Naive thymus-derived CD8-positive, alpha-beta T cell (primary cell): ENCODE measurements at regions of chr20 and their contacts with region 1.

Region 1: DNA sequence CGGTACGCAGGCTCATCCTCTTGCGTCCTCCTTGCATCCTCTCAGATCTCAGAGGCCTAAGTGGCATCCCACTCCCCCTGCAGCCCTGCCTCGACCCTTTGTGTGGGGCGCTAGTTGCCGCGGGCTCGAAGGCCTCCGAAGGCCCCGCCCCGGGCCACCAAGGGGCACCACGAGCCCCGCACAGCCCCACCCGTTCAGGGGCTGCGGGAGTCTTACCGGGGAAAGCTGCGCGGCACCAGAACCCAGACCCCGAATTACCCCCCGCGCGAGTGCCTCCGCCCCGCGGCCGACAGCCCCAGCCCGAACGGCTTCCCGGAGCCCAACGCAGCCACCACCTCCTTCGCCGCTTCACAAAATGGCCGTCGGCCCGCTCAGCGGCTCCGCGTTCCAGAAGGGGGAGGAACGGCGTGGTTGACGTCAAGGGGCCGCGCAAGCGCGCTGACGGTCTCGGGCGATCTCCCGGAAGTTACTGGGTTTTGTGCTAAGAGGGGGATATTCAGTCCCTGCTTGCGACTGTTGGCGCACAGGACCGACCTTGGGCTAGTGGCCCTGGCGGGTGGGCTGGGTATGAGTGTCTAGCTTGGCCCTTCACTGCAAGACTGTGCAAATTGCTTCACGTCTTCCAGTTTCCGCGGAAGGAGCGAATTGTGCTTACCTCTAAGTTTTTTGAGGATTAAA is at the starts of genes CPNE1 and RBM12:
- DNase-seq: peak; percentile 87 to 97 (median 94)
- ATAC-seq: peak; percentile 77 to 78
- H3K4me3 Mint-ChIP-seq: peak within 1 kb of the TSS; percentile 89 to 98 (median 96)
- H3K27ac Mint-ChIP-seq: peak within 1 kb of the TSS; percentile 96 to 100 (median 99)
- H3K4me1 Mint-ChIP-seq: peaks cover 10 to 55% (median 47%) of the 10 kb centered on the region in 4 donors
- H3K27me3 Mint-ChIP-seq: no peaks in the 10 kb centered on the region
- polyA plus RNA-seq, gene CPNE1: 329 to 392 (median 384) TPM
- polyA plus RNA-seq, gene RBM12: 35.2 to 43.7 (median 39.9) TPM

Region 2: GRCh38 chr20:35619196-35620095 is 45.2 kb before region 1 on chr20:
- POLR2A ChIA-PET with region 1: interaction called, 101 read pairs
- DNase-seq: peak; percentile 65 to 83 (median 71)
- ATAC-seq: peak; percentile 27 to 33
- H3K4me3 Mint-ChIP-seq: peak overlapping the region; percentile 87 to 93 (median 89)
- H3K27ac Mint-ChIP-seq: peak overlapping the region; percentile 66 to 95 (median 87)
- H3K4me1 Mint-ChIP-seq: peaks cover 16 to 44% (median 39%) of the 10 kb centered on the region in 4 donors
- H3K27me3 Mint-ChIP-seq: no peaks in the 10 kb centered on the region

Region 3: GRCh38 chr20:35652641-35653429 is 11.8 kb before region 1 on chr20:
- POLR2A ChIA-PET with region 1: interaction called, 12 read pairs
- DNase-seq: no peak
- ATAC-seq: no peak
- H3K4me3 Mint-ChIP-seq: no peak overlapping the region
- H3K27ac Mint-ChIP-seq: peak overlapping the region in 1 of 10 donors; percentile 44
- H3K4me1 Mint-ChIP-seq: peaks cover 21 to 58% (median 48%) of the 10 kb centered on the region in 4 donors
- H3K27me3 Mint-ChIP-seq: no peaks in the 10 kb centered on the region

Region 4: DNA sequence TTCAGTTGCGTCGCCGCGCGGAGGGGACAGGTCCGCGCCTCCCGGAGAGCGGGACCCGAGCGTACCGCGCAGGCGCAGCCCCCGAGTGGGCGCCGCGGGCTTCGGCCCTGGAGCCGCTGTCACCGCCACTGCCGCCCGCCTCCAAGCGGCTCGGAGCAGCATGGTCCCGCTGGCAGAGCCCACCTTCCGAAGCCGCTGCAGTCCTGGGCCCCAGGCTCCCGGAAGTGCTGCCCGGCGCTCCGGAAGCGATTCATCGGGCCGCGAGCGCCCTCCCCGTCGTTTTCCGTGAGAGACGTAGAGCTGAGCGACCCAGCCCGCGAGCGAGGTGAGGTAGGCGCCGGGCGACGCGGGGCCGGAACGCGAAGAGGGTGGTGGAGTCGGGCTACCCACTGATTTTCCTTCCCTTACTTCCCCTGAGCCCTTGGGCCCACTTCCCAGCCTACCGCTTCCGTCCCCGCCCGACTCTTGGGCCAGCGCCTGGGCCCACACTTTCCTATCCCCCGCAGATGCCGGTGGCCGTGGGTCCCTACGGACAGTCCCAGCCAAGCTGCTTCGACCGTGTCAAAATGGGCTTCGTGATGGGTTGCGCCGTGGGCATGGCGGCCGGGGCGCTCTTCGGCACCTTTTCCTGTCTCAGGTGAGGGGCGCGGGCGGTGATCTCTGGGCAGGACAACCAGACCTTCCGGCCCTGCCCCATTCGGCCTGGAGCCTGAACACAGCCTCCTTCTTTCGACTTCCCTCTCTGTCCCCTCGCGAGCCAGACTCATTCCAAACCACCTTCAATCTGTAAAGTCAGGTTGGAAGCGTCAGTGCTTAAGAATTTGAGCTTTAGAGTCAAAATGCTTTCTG is 34.7 kb after region 1 on chr20 and contains the starts of genes NFS1 and ROMO1:
- POLR2A ChIA-PET with region 1: interaction called, 20 read pairs
- DNase-seq: peak; percentile 73 to 92 (median 86)
- ATAC-seq: peak; percentile 83 to 92
- H3K4me3 Mint-ChIP-seq: peak within 1 kb of the TSS; percentile 85 to 98 (median 94)
- H3K27ac Mint-ChIP-seq: peak within 1 kb of the TSS; percentile 93 to 99 (median 97)
- H3K4me1 Mint-ChIP-seq: peaks cover 23 to 47% (median 38%) of the 10 kb centered on the region in 4 donors
- H3K27me3 Mint-ChIP-seq: no peaks in the 10 kb centered on the region
- polyA plus RNA-seq, gene NFS1: 8.6 to 16.6 (median 14.1) TPM
- polyA plus RNA-seq, gene ROMO1: 305 to 421 (median 381) TPM

Region 5: DNA sequence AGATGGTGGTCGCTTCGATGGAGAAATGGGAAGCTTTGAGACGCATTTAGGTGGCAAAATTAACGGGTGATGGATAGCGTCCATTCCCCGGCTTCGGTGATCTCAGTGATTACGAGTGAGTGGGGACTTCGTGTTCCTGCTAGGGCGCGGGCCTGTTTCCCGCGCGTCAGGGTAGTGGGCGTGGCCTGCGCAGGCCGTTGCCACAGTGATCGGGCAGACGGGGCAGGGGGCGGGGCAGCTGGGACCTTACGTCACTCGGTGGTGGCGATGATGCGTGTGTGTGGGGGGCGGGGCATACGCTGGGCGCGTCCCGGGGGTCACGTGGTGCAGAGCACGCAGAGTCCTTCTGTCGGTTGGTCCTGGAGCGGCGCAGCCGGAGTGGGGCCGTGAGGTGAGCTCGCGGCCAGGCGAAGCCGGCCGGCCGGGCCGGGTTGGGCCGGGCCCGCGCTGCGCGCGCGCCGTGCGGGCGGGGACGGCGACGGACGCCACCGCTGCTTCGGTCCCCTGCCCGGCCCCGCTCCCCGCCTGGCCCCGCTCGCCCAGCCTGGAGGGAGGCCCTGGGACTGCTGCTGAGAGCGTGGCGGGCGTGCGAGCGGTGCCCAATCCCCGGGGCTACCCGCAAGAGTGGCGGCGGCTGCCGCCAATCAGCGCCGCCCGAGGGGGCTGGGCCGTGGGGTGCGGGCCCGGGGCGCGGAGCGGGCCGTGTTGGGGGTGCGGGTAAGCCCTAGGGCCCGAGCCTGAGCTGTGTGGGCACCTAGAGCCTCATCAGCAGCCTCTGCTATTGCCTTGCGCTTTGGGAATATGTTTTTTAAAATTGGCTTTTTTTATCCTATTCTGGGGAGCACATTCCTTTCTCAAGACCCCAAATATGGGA is 107.2 kb after region 1 on chr20 and contains the start of gene PHF20:
- POLR2A ChIA-PET with region 1: interaction called, 10 read pairs
- DNase-seq: peak; percentile 99 to 100 (median 100)
- ATAC-seq: peak; percentile 81 to 87
- H3K4me3 Mint-ChIP-seq: peak within 1 kb of the TSS; percentile 84 to 98 (median 93)
- H3K27ac Mint-ChIP-seq: peak within 1 kb of the TSS; percentile 98 to 100 (median 100)
- H3K4me1 Mint-ChIP-seq: peaks cover 45 to 91% (median 75%) of the 10 kb centered on the region in 4 donors
- H3K27me3 Mint-ChIP-seq: no peaks in the 10 kb centered on the region
- polyA plus RNA-seq, gene PHF20: 114 to 135 (median 125) TPM